A673 (cell line): ENCODE measurements at regions of chr7 and their contacts with region 1.

Region 1: DNA sequence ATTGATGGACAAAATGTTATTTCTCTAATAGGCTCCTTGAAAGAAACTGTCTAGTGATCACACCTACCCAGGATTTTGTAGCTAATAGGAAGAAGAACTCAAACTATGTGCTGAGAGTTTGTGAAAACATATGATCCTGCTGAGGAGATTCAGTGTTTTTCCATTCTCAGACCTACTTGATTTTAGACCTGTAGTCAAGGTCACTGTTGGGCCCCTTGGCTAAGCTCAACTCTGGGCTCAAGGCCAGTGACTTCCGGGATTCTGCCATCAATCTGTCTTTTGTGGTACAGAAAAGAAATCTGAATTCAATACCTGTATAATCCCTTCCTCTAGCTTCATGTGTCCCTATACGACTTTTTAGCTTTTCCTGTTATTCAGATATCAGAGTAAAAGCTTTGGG is 79.7 kb upstream of the FERD3L start:
- DNase-seq: peak; percentile 37
- H3K4me3 ChIP-seq: no peak overlapping the region
- H3K27ac ChIP-seq: peak overlapping the region; percentile 20
- H3K4me1 ChIP-seq: peaks cover 21% of the 10 kb centered on the region
- H3K27me3 ChIP-seq: no peaks in the 10 kb centered on the region
- CTCF ChIP-seq: no peak

Region 2: GRCh38 chr7:18849130-18849529 is 375.8 kb before region 1 on chr7:
- CTCF ChIA-PET with region 1: no interaction called
- POLR2A ChIA-PET with region 1: interaction called, 17 read pairs
- intact Hi-C with region 1: no loop called
- DNase-seq: no peak
- H3K4me3 ChIP-seq: no peak overlapping the region
- H3K27ac ChIP-seq: no peak overlapping the region
- H3K4me1 ChIP-seq: peaks cover 26% of the 10 kb centered on the region
- H3K27me3 ChIP-seq: no peaks in the 10 kb centered on the region
- CTCF ChIP-seq: no peak